ENCODE measurements at regions of chr6 and their contacts with region 1.

Region 1: GRCh38 chr6:90361174-90361573 is 64.5 kb upstream of the BACH2 start:
- DNase-seq: no peak
- ATAC-seq: no peak
- H3K4me3 ChIP-seq: no peak overlapping the region
- H3K27ac ChIP-seq: no peak overlapping the region
- H3K4me1 ChIP-seq: no peaks in the 10 kb centered on the region
- H3K27me3 ChIP-seq: peaks cover 0 to 6% of the 10 kb centered on the region in 2 experiments; a peak in 1 of 5 replicates
- CTCF ChIP-seq: no peak
- EP300 ChIP-seq: no peak
- POLR2A ChIP-seq: no peak
- RAD21 ChIP-seq: no peak

Region 2: GRCh38 chr6:90290811-90291420 is 70.3 kb before region 1 on chr6:
- CTCF ChIA-PET with region 1: no interaction called
- POLR2A ChIA-PET with region 1: no interaction called
- in situ Hi-C with region 1: no loop called
- intact Hi-C with region 1: loop called (anchors 2 kb)
- DNase-seq: no peak
- ATAC-seq: no peak
- H3K4me3 ChIP-seq: no peak overlapping the region
- H3K27ac ChIP-seq: no peak overlapping the region
- H3K4me1 ChIP-seq: peaks cover 9% of the 10 kb centered on the region
- H3K27me3 ChIP-seq: peaks cover 8 to 55% of the 10 kb centered on the region in 2 experiments
- CTCF ChIP-seq: no peak
- EP300 ChIP-seq: no peak
- POLR2A ChIP-seq: no peak
- RAD21 ChIP-seq: no peak

Region 3: GRCh38 chr6:90516074-90516660 is 155.0 kb after region 1 on chr6:
- CTCF ChIA-PET with region 1: no interaction called
- POLR2A ChIA-PET with region 1: no interaction called
- in situ Hi-C with region 1: no loop called
- intact Hi-C with region 1: no loop called
- DNase-seq: no peak
- ATAC-seq: no peak
- H3K4me3 ChIP-seq: no peak overlapping the region
- H3K27ac ChIP-seq: no peak overlapping the region
- H3K4me1 ChIP-seq: no peaks in the 10 kb centered on the region
- H3K27me3 ChIP-seq: no peaks in the 10 kb centered on the region
- CTCF ChIP-seq: no peak
- EP300 ChIP-seq: no peak
- POLR2A ChIP-seq: no peak
- RAD21 ChIP-seq: no peak